ENCODE measurements at regions of chr9 and their contacts with region 1.

Region 1: GRCh38 chr9:14314929-14315645 is 1.1 kb upstream of the NFIB start:
- DNase-seq: no peak
- ATAC-seq: peak; percentile 28
- H3K4me3 ChIP-seq: peak overlapping the region; percentile 16; the same call in 1 of the 2 replicates
- H3K27ac ChIP-seq: no peak overlapping the region
- H3K4me1 ChIP-seq: peaks cover 5% of the 10 kb centered on the region; the same call in 1 of the 2 replicates
- H3K27me3 ChIP-seq: peaks cover 5 to 17% of the 10 kb centered on the region in 2 experiments
- CTCF ChIP-seq: no peak
- EP300 ChIP-seq: no peak
- POLR2A ChIP-seq: no peak
- RAD21 ChIP-seq: no peak

Region 2: GRCh38 chr9:14585730-14586473 is 270.8 kb after region 1 on chr9:
- CTCF ChIA-PET with region 1: no interaction called
- POLR2A ChIA-PET with region 1: no interaction called
- RAD21 ChIA-PET with region 1: no interaction called
- SMC1A ChIA-PET with region 1: no interaction called
- in situ Hi-C with region 1: no loop called
- intact Hi-C with region 1: loop called (anchors 10 kb)
- DNase-seq: peak; percentile 81
- ATAC-seq: peak; percentile 98
- H3K4me3 ChIP-seq: no peak overlapping the region
- H3K27ac ChIP-seq: no peak overlapping the region; the same call in 1 of the 2 replicates
- H3K4me1 ChIP-seq: peaks cover 13% of the 10 kb centered on the region
- H3K27me3 ChIP-seq: no peaks in the 10 kb centered on the region
- CTCF ChIP-seq: no peak
- EP300 ChIP-seq: peak; percentile 55 to 76; a peak in 2 of 4 replicates
- POLR2A ChIP-seq: no peak
- RAD21 ChIP-seq: no peak

Region 3: DNA sequence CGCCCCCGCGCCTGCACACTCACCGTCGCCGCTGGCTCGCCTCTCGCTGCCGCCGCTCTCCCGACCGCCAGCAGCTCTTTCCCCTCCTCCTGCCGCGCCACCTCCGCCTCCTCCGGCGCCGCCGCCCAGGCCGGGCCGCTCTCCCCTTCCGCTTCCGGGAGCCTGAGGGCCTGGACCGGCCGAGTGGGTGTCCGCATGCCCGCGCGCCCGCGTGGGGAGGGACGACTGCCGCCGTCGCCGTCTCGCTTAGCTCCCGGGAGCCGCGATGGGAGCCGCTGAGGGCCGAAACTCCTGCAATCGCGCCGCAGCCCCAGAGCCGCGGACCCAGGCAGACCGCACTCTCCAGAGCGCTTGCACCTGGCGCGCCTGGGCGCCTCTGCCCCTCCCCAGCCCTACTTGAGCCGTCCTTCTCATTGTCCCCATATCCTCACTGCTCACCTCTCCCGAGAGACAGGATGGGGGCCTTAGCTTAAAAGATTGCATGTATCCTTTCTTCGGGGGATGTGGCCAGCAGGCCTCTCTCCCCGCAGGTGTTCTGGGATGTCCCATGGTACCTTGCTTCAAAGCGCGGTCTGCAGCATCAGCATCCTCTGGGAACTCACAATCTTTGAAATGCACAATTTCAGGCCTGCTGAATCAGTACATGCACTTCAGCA is 378.2 kb after region 1 on chr9 and contains the start of gene ZDHHC21:
- CTCF ChIA-PET with region 1: no interaction called
- POLR2A ChIA-PET with region 1: no interaction called
- RAD21 ChIA-PET with region 1: no interaction called
- SMC1A ChIA-PET with region 1: no interaction called
- in situ Hi-C with region 1: no loop called
- intact Hi-C with region 1: loop called (anchors 5 kb)
- DNase-seq: no peak
- ATAC-seq: peak; percentile 92
- H3K4me3 ChIP-seq: peak within 1 kb of the TSS; percentile 98
- H3K27ac ChIP-seq: peak within 1 kb of the TSS; percentile 66
- H3K4me1 ChIP-seq: peaks cover 11% of the 10 kb centered on the region
- H3K27me3 ChIP-seq: no peaks in the 10 kb centered on the region; a peak in 2 of 4 replicates
- CTCF ChIP-seq: no peak
- EP300 ChIP-seq: no peak
- POLR2A ChIP-seq: peak; percentile 92
- RAD21 ChIP-seq: no peak
- polyA plus RNA-seq, gene ZDHHC21: 2.6 to 2.9 TPM

Measured in GM12878 (cell line).